ENCODE measurements at regions of chr4 and their contacts with region 1.

Region 1: DNA sequence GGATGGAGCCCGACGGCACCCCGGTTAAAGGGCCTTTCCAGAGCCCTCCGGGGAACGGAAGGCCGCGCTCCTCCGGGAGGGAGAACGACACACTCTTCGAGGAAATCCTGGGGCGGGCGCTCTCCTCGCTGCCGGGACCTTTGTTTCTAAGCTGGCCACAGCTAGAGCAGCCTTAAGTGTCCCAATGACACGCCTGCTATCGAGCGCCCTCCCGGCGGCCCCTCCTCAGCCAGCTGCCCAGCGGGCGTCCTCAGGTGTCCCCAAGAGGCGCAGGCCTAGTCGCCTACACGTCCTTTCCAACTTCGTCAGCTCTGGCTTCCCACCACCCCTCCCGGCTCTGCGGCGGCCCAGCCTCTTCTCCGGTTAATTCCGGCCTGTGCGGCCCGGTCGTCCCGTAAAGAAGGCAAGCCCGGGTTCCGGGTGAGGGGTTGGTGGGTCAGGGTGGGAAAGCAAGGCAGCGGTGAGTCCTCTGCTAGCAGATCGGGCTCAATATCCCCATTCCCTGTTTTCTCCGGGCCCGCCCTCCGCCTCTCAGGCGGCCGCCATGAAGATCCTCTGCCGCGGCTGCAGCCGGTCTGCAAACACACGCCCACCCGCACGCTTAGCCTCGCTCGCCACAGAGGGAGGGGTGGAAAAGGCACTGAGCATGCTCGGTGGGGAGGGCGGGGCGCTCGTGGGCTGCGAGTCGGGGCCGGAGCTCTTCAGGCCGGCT is 449 bp upstream of the RAP1GDS1 start:
- DNase-seq: peak; percentile 89
- ATAC-seq: peak; percentile 93
- H3K4me3 Mint-ChIP-seq: peak overlapping the region; percentile 95
- H3K27ac Mint-ChIP-seq: peak overlapping the region; percentile 94
- H3K4me1 Mint-ChIP-seq: peaks cover 48% of the 10 kb centered on the region
- H3K27me3 Mint-ChIP-seq: no peaks in the 10 kb centered on the region
- CTCF ChIP-seq: no peak

Region 2: DNA sequence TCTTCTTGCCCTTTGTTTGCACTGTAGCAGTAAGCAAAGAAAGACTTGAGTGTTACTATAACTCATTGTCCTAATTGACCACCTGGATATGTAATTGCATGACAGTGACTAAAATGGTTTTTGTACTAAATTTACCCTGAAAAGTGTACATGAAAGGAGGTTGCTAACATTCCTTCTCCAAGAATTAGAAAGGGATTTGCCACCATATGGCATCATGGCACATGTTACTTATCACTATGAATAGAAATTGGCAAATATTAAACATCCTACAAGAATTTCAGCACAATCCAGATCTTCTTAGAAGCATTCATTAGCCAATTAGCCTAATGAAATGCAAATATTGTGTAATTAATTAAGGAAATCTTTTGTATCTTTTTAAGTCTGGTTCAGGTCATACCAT is 951.6 kb before region 1 on chr4:
- CTCF ChIA-PET with region 1: no interaction called
- POLR2A ChIA-PET with region 1: no interaction called
- intact Hi-C with region 1: no loop called
- DNase-seq: no peak
- ATAC-seq: no peak
- H3K4me3 Mint-ChIP-seq: no peak overlapping the region
- H3K27ac Mint-ChIP-seq: no peak overlapping the region
- H3K4me1 Mint-ChIP-seq: no peaks in the 10 kb centered on the region
- H3K27me3 Mint-ChIP-seq: no peaks in the 10 kb centered on the region
- CTCF ChIP-seq: no peak

Region 3: DNA sequence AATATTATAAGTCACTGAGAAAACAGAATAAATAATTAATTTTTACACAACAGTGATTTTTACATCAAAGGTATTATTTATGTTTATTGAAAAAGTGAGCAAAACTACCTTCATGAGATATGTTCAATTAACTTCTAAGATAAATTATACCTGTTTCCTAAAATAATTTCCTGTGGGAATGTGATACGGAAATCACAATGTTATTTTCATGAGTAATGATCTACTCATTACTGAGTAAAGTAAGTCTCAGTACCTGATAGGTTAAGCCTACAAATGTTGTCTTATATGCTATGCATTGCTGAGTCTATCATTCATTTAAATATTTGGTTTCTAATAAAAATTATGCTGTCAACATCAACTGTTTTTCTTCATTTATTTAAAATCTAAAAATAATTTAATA is 441.4 kb before region 1 on chr4:
- CTCF ChIA-PET with region 1: no interaction called
- POLR2A ChIA-PET with region 1: no interaction called
- intact Hi-C with region 1: no loop called
- DNase-seq: no peak
- ATAC-seq: no peak
- H3K4me3 Mint-ChIP-seq: no peak overlapping the region
- H3K27ac Mint-ChIP-seq: no peak overlapping the region
- H3K4me1 Mint-ChIP-seq: no peaks in the 10 kb centered on the region
- H3K27me3 Mint-ChIP-seq: no peaks in the 10 kb centered on the region
- CTCF ChIP-seq: no peak

Region 4: DNA sequence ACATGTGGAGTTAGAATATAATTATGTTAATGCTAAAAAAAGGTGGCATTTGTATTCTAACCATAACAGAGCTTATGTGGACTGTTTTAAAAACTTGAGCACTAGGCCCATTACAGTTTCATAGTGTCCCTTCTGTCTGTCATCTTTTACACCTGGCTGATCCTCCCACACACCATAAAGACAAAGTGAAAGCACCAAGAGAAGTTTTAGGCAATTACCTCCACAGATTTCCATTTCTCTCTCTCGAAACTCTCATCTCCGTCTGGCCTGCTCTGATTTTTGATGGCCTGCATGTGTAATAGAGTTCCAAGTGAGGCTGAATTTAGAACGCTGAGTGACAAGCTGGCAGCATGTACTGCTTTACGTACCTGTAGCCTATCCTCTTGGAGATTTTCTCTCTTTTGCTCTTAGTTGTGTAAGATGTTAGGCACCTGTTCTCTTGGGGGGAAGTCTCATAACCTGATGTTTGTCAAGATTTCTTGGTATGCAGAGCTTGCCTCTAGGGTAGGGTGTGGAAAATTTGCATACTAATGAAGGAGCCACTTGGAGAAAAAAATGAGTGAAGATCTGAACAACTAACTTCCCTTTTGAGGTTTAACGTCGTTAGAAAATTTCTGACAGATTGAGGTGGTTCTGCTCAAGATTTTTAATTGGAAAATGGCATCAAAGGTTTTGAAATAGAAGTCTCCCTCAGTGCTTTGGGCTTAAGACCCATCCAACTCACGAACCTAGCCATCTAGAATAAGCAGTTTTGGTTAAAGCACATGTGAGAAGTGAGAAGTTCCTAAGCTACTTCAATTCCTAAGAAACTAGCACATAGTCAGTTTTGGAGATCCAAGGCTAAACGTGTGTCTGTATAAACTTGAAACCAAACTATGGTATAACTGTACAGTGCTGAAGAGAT is 57.2 kb before region 1 on chr4:
- CTCF ChIA-PET with region 1: interaction called, 5 read pairs
- POLR2A ChIA-PET with region 1: interaction called, 61 read pairs
- intact Hi-C with region 1: loop called (anchors 1 kb)
- DNase-seq: no peak
- ATAC-seq: peak; percentile 82
- H3K4me3 Mint-ChIP-seq: peak overlapping the region; percentile 62
- H3K27ac Mint-ChIP-seq: peak overlapping the region; percentile 86
- H3K4me1 Mint-ChIP-seq: peaks cover 37% of the 10 kb centered on the region
- H3K27me3 Mint-ChIP-seq: no peaks in the 10 kb centered on the region
- CTCF ChIP-seq: no peak

Region 5: GRCh38 chr4:98289375-98289774 is 28.6 kb after region 1 on chr4:
- CTCF ChIA-PET with region 1: no interaction called
- POLR2A ChIA-PET with region 1: interaction called, 30 read pairs
- intact Hi-C with region 1: loop called (anchors 2 kb)
- DNase-seq: no peak
- ATAC-seq: peak; percentile 25
- H3K4me3 Mint-ChIP-seq: peak overlapping the region; percentile 67
- H3K27ac Mint-ChIP-seq: peak overlapping the region; percentile 71
- H3K4me1 Mint-ChIP-seq: peaks cover 58% of the 10 kb centered on the region
- H3K27me3 Mint-ChIP-seq: no peaks in the 10 kb centered on the region
- CTCF ChIP-seq: no peak

Region 6: GRCh38 chr4:98446499-98447375 is 186.0 kb after region 1 on chr4:
- CTCF ChIA-PET with region 1: no interaction called
- POLR2A ChIA-PET with region 1: interaction called, 8 read pairs
- intact Hi-C with region 1: loop called (anchors 1 kb)
- DNase-seq: no peak
- ATAC-seq: peak; percentile 67
- H3K4me3 Mint-ChIP-seq: peak overlapping the region; percentile 72
- H3K27ac Mint-ChIP-seq: peak overlapping the region; percentile 87
- H3K4me1 Mint-ChIP-seq: peaks cover 41% of the 10 kb centered on the region
- H3K27me3 Mint-ChIP-seq: no peaks in the 10 kb centered on the region
- CTCF ChIP-seq: no peak

Region 7: GRCh38 chr4:98639523-98639922 is 378.8 kb after region 1 on chr4:
- CTCF ChIA-PET with region 1: no interaction called
- POLR2A ChIA-PET with region 1: no interaction called
- intact Hi-C with region 1: no loop called
- DNase-seq: no peak
- ATAC-seq: no peak
- H3K4me3 Mint-ChIP-seq: peak overlapping the region; percentile 36
- H3K27ac Mint-ChIP-seq: no peak overlapping the region
- H3K4me1 Mint-ChIP-seq: peaks cover 6% of the 10 kb centered on the region
- H3K27me3 Mint-ChIP-seq: no peaks in the 10 kb centered on the region
- CTCF ChIP-seq: no peak

Region 8: DNA sequence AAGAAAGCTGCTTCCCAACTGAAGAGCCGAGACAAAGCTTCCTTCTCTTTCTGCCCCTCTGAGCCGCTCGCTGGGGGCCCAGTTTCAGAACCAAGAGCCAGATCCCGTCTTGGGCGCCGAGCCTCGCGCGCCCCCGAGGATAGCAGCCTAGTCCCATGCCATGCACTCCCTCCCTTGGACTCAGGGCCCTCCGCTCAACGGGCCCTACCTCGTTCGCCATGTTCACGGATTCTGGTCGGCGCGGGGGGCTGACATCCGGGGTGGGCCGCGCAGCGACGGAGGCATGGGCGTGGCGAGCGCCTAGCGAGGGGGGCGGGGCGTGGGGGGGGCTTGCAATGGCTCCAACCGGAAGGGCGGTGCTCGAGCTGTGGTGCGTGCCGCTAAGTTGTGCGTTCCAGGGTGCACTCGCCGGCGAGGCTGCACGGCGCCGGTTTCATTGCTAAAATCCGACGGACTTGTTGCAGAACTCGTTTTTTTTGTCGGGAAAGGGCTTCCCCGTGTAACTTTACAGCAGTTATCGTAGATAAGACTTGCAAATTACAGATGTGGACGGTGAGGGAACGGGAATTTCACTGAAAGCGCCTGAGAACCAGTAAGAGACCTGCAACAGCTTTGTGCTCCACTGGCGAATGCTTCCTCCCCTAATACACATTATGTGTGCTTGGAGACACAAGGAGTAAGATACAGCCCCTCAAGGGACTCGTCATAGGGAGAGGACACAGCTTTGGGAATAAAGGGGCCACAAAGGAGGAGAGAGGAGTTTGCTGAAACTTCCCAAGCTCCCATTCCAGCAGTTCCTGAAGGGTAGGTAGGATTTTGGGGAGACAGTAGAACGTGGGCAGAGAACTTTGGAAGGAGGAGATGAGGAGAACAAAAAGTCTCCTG is 828.0 kb after region 1 on chr4 and contains the start of gene ADH5:
- CTCF ChIA-PET with region 1: no interaction called
- POLR2A ChIA-PET with region 1: interaction called, 14 read pairs
- intact Hi-C with region 1: loop called (anchors 1 kb)
- DNase-seq: peak; percentile 77
- ATAC-seq: peak; percentile 95
- H3K4me3 Mint-ChIP-seq: peak within 1 kb of the TSS; percentile 99
- H3K27ac Mint-ChIP-seq: peak within 1 kb of the TSS; percentile 99
- H3K4me1 Mint-ChIP-seq: peaks cover 41% of the 10 kb centered on the region
- H3K27me3 Mint-ChIP-seq: no peaks in the 10 kb centered on the region
- CTCF ChIP-seq: no peak
- total RNA-seq, gene ADH5: 70.1 and 74.2 TPM in 2 replicates